ENCODE measurements at regions of chr12 and their contacts with region 1.

Region 1: GRCh38 chr12:70763666-70764065 is 126.4 kb upstream of the PTPRB start:
- DNase-seq: no peak
- ATAC-seq: no peak
- H3K4me3 ChIP-seq: no peak overlapping the region
- H3K4me3 Mint-ChIP-seq: no peak overlapping the region
- H3K27ac ChIP-seq: no peak overlapping the region
- H3K27ac Mint-ChIP-seq: no peak overlapping the region
- H3K4me1 ChIP-seq: no peaks in the 10 kb centered on the region
- H3K4me1 Mint-ChIP-seq: no peaks in the 10 kb centered on the region
- H3K27me3 ChIP-seq: no peaks in the 10 kb centered on the region
- H3K27me3 Mint-ChIP-seq: peaks cover 2% of the 10 kb centered on the region
- CTCF ChIP-seq: no peak

Region 2: DNA sequence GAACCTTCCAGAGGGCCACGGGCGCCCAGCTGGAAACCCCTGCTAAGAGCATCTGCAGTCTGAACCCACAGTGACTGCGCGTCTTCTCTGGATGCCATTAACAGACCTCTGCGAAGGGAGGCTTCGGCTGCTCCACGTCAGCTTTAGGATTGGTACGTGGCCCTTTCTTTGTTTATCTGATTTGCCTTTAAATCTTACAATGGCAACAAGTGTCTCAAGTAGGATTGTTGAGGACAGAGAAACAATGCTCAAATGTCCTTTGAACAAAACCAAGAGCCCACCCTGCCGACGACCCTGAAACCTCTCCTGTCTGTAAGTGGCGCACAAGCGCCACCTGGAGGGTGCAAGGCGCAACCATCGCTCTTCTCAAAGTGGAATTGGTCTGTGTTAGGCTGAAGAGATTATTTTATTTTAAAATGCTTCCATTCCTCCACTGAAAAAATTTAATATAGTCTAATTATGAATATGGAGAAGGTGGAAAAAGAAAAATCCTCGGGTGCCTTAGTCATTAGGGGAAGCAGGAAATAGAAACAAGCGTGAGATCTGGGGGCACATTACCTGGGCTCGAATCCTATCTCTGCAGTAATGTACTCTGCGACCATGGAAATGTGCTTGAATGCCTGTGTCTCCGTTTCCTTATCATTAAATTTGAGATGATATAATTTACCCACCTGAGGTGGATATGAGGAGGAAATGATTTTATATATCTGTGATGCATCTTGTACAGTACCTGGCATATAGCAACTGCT is 43.8 kb before region 1 on chr12:
- CTCF ChIA-PET with region 1: no interaction called
- POLR2A ChIA-PET with region 1: no interaction called
- intact Hi-C with region 1: no loop called
- DNase-seq: peak in 7 of 9 experiments; percentile 2 to 53 (median 29)
- ATAC-seq: peak; percentile 48
- H3K4me3 ChIP-seq: no peak overlapping the region
- H3K4me3 Mint-ChIP-seq: peak overlapping the region; percentile 51
- H3K27ac ChIP-seq: no peak overlapping the region
- H3K27ac Mint-ChIP-seq: no peak overlapping the region
- H3K4me1 ChIP-seq: peaks cover 4% of the 10 kb centered on the region
- H3K4me1 Mint-ChIP-seq: peaks cover 9% of the 10 kb centered on the region
- H3K27me3 ChIP-seq: no peaks in the 10 kb centered on the region
- H3K27me3 Mint-ChIP-seq: peaks cover 12% of the 10 kb centered on the region
- CTCF ChIP-seq: peak; percentile 74

Region 3: GRCh38 chr12:70744133-70744532 is 19.5 kb before region 1 on chr12:
- CTCF ChIA-PET with region 1: no interaction called
- POLR2A ChIA-PET with region 1: no interaction called
- intact Hi-C with region 1: no loop called
- DNase-seq: no peak
- ATAC-seq: no peak
- H3K4me3 ChIP-seq: no peak overlapping the region
- H3K4me3 Mint-ChIP-seq: no peak overlapping the region
- H3K27ac ChIP-seq: no peak overlapping the region
- H3K27ac Mint-ChIP-seq: no peak overlapping the region
- H3K4me1 ChIP-seq: no peaks in the 10 kb centered on the region
- H3K4me1 Mint-ChIP-seq: no peaks in the 10 kb centered on the region
- H3K27me3 ChIP-seq: no peaks in the 10 kb centered on the region
- H3K27me3 Mint-ChIP-seq: peaks cover 9% of the 10 kb centered on the region
- CTCF ChIP-seq: no peak

Region 4: GRCh38 chr12:70812151-70812550 is 48.5 kb after region 1 on chr12:
- CTCF ChIA-PET with region 1: no interaction called
- POLR2A ChIA-PET with region 1: no interaction called
- intact Hi-C with region 1: loop called in 1 of 2 experiments (anchors 5 kb)
- DNase-seq: no peak
- ATAC-seq: no peak
- H3K4me3 ChIP-seq: no peak overlapping the region
- H3K4me3 Mint-ChIP-seq: no peak overlapping the region
- H3K27ac ChIP-seq: no peak overlapping the region
- H3K27ac Mint-ChIP-seq: no peak overlapping the region
- H3K4me1 ChIP-seq: no peaks in the 10 kb centered on the region
- H3K4me1 Mint-ChIP-seq: no peaks in the 10 kb centered on the region
- H3K27me3 ChIP-seq: no peaks in the 10 kb centered on the region
- H3K27me3 Mint-ChIP-seq: peaks cover 2% of the 10 kb centered on the region
- CTCF ChIP-seq: no peak

Region 5: DNA sequence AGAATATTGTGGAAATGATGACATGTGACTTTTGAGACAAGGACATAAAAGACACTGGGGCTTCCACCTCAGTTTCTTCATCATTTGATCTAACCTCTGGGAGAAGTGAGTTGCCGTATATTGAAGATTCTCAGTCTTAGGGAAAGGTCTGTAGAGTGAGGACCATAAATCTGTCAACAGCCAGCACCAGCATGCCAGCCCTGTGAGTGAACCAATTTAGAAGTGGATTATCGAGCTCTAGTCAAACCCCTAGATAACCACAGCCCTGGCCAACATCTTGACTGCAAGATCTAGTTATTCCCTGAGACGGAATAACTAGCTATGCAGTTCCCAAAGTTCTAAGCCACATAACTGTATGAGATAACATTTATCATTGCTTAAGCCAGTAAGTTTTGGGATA is 265.6 kb after region 1 on chr12:
- CTCF ChIA-PET with region 1: no interaction called
- POLR2A ChIA-PET with region 1: no interaction called
- intact Hi-C with region 1: no loop called
- DNase-seq: no peak
- ATAC-seq: no peak
- H3K4me3 ChIP-seq: no peak overlapping the region
- H3K4me3 Mint-ChIP-seq: no peak overlapping the region
- H3K27ac ChIP-seq: no peak overlapping the region
- H3K27ac Mint-ChIP-seq: no peak overlapping the region
- H3K4me1 ChIP-seq: no peaks in the 10 kb centered on the region
- H3K4me1 Mint-ChIP-seq: no peaks in the 10 kb centered on the region
- H3K27me3 ChIP-seq: no peaks in the 10 kb centered on the region
- H3K27me3 Mint-ChIP-seq: no peaks in the 10 kb centered on the region
- CTCF ChIP-seq: no peak